HCT116 (cell line): ENCODE measurements at regions of chr7 and their contacts with region 1.

Region 1: DNA sequence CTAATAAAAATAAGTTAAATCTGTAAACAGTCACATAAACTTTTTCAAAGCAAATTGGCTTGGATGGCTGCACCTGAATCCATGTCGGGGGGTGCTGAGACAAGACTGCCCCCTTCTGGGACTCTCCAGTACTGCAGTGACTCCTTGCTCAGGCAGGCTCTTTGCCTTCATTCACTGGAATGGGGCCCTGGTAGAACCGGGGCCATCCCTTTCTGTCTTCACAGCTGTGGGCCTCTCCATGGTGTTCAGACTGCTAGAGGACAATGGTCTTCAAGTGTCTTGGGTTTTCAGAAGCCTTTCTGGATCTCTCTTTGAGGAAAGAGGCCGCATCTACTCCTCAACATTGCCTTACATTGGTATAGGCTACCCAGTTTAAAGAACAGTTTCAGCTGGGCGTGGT is 16.1 kb upstream of the IMPDH1 start:
- DNase-seq: peak; percentile 57
- ATAC-seq: peak; percentile 80
- H3K4me3 ChIP-seq: no peak overlapping the region
- H3K27ac ChIP-seq: no peak overlapping the region
- H3K4me1 ChIP-seq: peaks cover 0 to 16% of the 10 kb centered on the region in 2 experiments; a peak in 1 of 4 replicates
- H3K27me3 ChIP-seq: no peaks in the 10 kb centered on the region
- CTCF ChIP-seq: peak; percentile 91 to 97 (median 95)
- POLR2A ChIP-seq: no peak
- RAD21 ChIP-seq: peak; percentile 93

Region 2: GRCh38 chr7:128347647-128348097 is 78.2 kb before region 1 on chr7:
- CTCF ChIA-PET with region 1: interaction called, 30 read pairs
- POLR2A ChIA-PET with region 1: no interaction called
- RAD21 ChIA-PET with region 1: interaction called in 1 of 2 experiments, 5 read pairs
- intact Hi-C with region 1: loop called (anchors 1 kb)
- DNase-seq: peak; percentile 18
- ATAC-seq: peak; percentile 60
- H3K4me3 ChIP-seq: no peak overlapping the region
- H3K27ac ChIP-seq: no peak overlapping the region
- H3K4me1 ChIP-seq: peaks cover 3 to 4% of the 10 kb centered on the region in 2 experiments; a peak in 3 of 4 replicates
- H3K27me3 ChIP-seq: no peaks in the 10 kb centered on the region
- CTCF ChIP-seq: peak; percentile 76 to 83 (median 78)
- POLR2A ChIP-seq: no peak
- RAD21 ChIP-seq: peak; percentile 91

Region 3: GRCh38 chr7:128409596-128410160 is 16.2 kb before region 1 on chr7 and contains the start of gene IMPDH1:
- CTCF ChIA-PET with region 1: interaction called, 42 read pairs
- POLR2A ChIA-PET with region 1: interaction called, 3 read pairs
- RAD21 ChIA-PET with region 1: no interaction called
- intact Hi-C with region 1: no loop called
- DNase-seq: no peak
- ATAC-seq: peak; percentile 84
- H3K4me3 ChIP-seq: peak within 1 kb of the TSS; percentile 65 to 70
- H3K27ac ChIP-seq: peak within 1 kb of the TSS; percentile 75
- H3K4me1 ChIP-seq: peaks cover 25 to 48% of the 10 kb centered on the region in 2 experiments
- H3K27me3 ChIP-seq: no peaks in the 10 kb centered on the region
- CTCF ChIP-seq: no peak
- POLR2A ChIP-seq: peak; percentile 80
- RAD21 ChIP-seq: no peak
- total RNA-seq, gene IMPDH1: 98.2 TPM

Region 4: DNA sequence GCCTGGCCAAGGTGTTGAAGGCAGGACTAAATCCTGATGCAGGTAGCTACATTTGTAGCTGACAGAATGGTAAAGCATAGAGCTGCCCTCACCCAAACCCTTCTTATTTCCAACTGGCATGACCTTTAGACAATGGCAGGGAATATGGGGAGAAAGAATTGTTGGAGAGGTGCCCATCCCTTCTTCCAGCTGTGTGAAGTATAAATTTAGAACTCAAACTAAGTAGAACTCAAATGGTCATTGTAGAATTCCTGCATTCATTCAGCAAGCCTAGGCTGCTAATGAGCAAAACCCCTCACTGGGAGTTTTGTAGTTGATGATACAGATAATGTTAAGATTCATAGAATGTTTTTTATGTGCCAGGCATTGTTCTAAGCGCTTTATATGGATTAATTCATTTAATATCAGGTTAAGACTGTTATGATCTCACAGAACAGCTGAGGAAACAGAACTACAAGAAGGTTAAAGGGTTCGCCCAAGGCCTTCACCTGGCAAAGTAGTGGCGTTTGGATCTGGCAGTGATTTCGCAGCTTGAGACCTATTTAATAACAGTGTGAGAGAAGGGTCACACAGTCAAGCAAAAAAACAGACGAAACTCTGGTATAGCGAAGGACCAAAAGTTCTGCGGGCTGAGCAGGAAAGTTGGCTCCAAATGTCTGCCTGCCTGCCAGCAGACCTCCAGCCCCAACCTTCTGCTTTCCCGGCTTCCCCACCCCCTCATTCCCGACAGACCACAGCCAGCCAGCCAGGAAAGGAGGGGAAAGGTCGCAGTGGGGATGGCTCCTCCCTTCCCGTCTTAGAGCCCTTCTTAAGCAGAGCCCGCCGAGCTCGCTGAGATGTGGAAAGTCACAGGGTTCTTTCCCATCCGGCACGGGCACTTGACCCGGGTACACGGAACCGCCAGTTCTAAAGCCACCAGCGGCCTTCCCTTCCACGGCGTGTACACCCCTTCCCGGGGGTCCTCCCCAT is 28.3 kb after region 1 on chr7:
- CTCF ChIA-PET with region 1: interaction called, 114 read pairs
- POLR2A ChIA-PET with region 1: no interaction called
- RAD21 ChIA-PET with region 1: interaction called in 1 of 2 experiments, 3 read pairs
- intact Hi-C with region 1: loop called (anchors 1 kb)
- DNase-seq: no peak
- ATAC-seq: no peak
- H3K4me3 ChIP-seq: peak overlapping the region in 1 of 2 experiments; percentile 99; a peak in 1 of 4 replicates
- H3K27ac ChIP-seq: no peak overlapping the region
- H3K4me1 ChIP-seq: peaks cover 11 to 36% of the 10 kb centered on the region in 2 experiments
- H3K27me3 ChIP-seq: 0 out of 2 replicates have a peak, but pooled peaks cover 4% of the 10 kb centered on the region
- CTCF ChIP-seq: no peak
- POLR2A ChIP-seq: no peak
- RAD21 ChIP-seq: no peak

Region 5: DNA sequence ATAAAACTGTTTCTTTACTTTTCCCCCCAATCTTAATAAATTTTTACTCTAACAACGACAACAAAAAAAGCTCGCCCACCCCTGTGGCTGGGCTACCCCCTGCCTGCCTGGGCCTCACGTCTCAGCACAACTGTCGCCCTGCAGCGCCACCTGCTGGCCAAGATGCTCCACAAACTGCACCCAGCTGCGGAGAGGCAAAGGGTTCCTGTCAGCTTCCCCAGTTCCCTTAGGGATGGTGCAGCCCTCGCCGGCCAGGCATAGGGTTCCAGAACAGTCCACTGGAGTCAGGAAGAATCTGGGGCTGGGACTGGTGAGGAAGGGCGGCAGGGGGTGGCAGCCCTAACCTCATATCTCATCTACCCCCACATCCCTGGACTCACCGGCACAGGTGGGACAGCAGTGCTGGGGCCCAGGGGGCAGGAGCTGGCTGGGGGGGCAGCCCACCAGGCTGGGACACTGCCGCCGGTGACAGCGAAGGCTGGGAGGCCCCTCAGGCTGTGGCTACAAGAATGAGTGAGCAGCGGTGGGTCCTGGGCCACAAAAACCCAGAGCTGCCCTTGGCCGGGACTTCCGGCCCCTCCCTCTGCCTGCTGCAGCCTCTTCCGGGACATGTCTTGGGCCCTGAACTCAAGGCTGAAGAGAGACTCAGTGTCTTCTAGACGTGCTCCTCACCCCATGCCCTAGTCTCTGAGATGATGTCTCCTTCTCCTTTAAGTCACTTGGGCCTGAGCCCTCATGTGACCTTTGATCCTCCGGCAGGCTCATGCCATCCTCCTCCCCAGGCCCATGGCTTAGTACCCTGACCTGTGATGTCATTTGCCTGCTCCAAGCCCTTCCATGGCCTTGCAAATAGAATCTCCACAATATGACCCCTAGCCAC is 458.0 kb after region 1 on chr7:
- CTCF ChIA-PET with region 1: interaction called, 12 read pairs
- POLR2A ChIA-PET with region 1: no interaction called
- RAD21 ChIA-PET with region 1: interaction called in 1 of 2 experiments, 4 read pairs
- intact Hi-C with region 1: loop called (anchors 2 kb)
- DNase-seq: peak; percentile 58
- ATAC-seq: peak; percentile 71
- H3K4me3 ChIP-seq: no peak overlapping the region
- H3K27ac ChIP-seq: no peak overlapping the region
- H3K4me1 ChIP-seq: peaks cover 0 to 15% of the 10 kb centered on the region in 2 experiments; a peak in 2 of 4 replicates
- H3K27me3 ChIP-seq: no peaks in the 10 kb centered on the region
- CTCF ChIP-seq: peak in 2 of 3 experiments; percentile 83 to 97; a peak in 4 of 6 replicates
- POLR2A ChIP-seq: no peak
- RAD21 ChIP-seq: no peak